ENCODE measurements at regions of chr11 and their contacts with region 1.

Region 1: DNA sequence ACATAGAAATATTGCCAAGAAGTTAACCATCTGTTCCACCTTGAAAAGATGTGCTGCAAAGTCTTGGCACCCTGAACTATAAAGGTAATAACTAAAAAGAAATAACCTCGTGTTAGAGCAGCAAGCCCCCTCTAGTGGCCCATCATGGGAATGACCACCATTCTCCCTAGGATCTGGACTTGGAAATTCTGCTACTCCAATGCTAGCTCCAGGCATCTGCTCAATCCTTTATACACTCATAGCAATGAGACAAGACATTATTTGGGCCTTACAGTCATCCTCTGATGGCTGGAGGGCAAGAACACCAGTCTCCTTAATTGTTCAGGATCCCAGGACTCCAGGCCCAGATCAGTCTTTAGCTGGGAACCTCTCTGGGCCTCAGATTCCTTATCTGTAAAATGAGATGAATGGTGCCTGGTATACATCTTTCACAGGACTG is 76.0 kb downstream of the CWC15 start:
- DNase-seq: peak; percentile 42
- CTCF ChIP-seq: peak; percentile 69

Region 2: GRCh38 chr11:93895106-93895862 is 1002.1 kb before region 1 on chr11:
- CTCF ChIA-PET with region 1: interaction called, 11 read pairs
- POLR2A ChIA-PET with region 1: no interaction called
- DNase-seq: no peak
- CTCF ChIP-seq: peak; percentile 18

Region 3: GRCh38 chr11:94623120-94623735 is 274.1 kb before region 1 on chr11:
- CTCF ChIA-PET with region 1: interaction called, 10 read pairs
- POLR2A ChIA-PET with region 1: no interaction called
- DNase-seq: peak; percentile 64
- CTCF ChIP-seq: no peak

Region 4: GRCh38 chr11:94910779-94911178 is 13.4 kb after region 1 on chr11:
- CTCF ChIA-PET with region 1: interaction called, 15 read pairs
- POLR2A ChIA-PET with region 1: no interaction called
- DNase-seq: no peak
- CTCF ChIP-seq: no peak